ENCODE measurements at regions of chr7 and their contacts with region 1.

Region 1: GRCh38 chr7:873367-874002 is 2.9 kb upstream of the GET4 start:
- DNase-seq: peak; percentile 61 to 97 (median 78)

Region 2: GRCh38 chr7:260441-261281 is 612.8 kb before region 1 on chr7:
- intact Hi-C with region 1: no loop called
- DNase-seq: peak in 4 of 10 donors; percentile 26 to 80 (median 72)

Region 3: DNA sequence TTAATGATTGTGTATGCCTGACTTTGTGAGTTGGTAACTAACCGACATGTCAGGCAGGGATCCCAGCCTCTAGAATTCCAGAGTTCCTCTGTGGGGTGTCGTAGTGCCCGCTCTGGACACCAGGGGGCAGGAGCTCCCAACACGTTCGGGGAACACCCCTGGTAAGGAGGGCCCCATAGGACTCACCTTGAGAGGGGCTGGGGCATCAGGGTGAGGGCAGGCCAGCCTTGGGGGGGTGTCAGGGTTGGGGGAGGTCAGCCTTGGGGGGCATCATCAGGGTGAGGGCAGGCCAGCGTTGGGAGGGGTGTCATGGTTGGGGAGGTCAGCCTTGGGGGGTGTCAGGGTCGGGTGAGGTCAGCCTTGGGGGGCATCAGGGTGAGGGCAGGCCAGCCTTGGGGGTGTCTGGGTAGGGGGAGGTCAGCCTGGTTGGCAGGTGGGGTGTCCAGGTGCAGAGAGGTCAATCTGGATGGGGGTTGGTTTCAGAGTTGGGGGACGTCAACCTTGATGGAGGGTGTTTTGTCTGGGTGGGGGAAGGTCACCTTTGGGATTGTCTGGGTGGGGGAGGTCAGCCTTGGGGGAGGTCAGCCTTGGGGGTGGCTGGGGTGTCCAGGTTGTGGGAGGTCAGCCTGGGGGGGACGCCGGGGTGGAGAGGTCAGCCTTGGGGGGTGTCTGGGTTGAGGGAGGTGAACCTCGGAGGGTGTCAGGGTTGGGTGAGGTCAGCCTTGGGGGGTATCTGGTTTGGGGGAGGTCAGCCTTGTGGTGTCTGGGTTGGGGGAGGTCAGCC is 86.8 kb before region 1 on chr7:
- intact Hi-C with region 1: loop called (anchors 1 kb)
- DNase-seq: peak in 9 of 10 donors; percentile 50 to 95 (median 72)

Region 4: GRCh38 chr7:816300-816750 is 57.2 kb before region 1 on chr7:
- intact Hi-C with region 1: loop called (anchors 2 kb)
- DNase-seq: peak; percentile 92 to 100 (median 98)